HCT116 (cell line): ENCODE measurements at regions of chr2 and their contacts with region 1.

Region 1: GRCh38 chr2:110157153-110157793 is 41.7 kb upstream of the MALL start:
- DNase-seq: peak; percentile 66
- ATAC-seq: peak; percentile 93
- H3K4me3 ChIP-seq: no peak overlapping the region
- H3K27ac ChIP-seq: peak overlapping the region; percentile 1; the same call in 1 of the 2 replicates
- H3K4me1 ChIP-seq: peaks cover 0 to 9% of the 10 kb centered on the region in 2 experiments; a peak in 1 of 4 replicates
- H3K27me3 ChIP-seq: no peaks in the 10 kb centered on the region
- CTCF ChIP-seq: peak; percentile 80 to 92 (median 84)
- POLR2A ChIP-seq: no peak
- RAD21 ChIP-seq: peak; percentile 96

Region 2: GRCh38 chr2:108257757-108258331 is 1899.4 kb before region 1 on chr2:
- CTCF ChIA-PET with region 1: no interaction called
- POLR2A ChIA-PET with region 1: no interaction called
- RAD21 ChIA-PET with region 1: no interaction called
- intact Hi-C with region 1: no loop called
- DNase-seq: no peak
- ATAC-seq: no peak
- H3K4me3 ChIP-seq: no peak overlapping the region
- H3K27ac ChIP-seq: no peak overlapping the region
- H3K4me1 ChIP-seq: no peaks in the 10 kb centered on the region
- H3K27me3 ChIP-seq: no peaks in the 10 kb centered on the region
- CTCF ChIP-seq: no peak
- POLR2A ChIP-seq: no peak
- RAD21 ChIP-seq: no peak

Region 3: GRCh38 chr2:110116033-110116710 is 41.1 kb before region 1 on chr2:
- CTCF ChIA-PET with region 1: interaction called, 4 read pairs
- POLR2A ChIA-PET with region 1: no interaction called
- RAD21 ChIA-PET with region 1: no interaction called
- intact Hi-C with region 1: loop called (anchors 2 kb)
- DNase-seq: peak; percentile 56
- ATAC-seq: peak; percentile 74
- H3K4me3 ChIP-seq: peak overlapping the region; percentile 85 to 88
- H3K27ac ChIP-seq: peak overlapping the region; percentile 82
- H3K4me1 ChIP-seq: peaks cover 24 to 73% of the 10 kb centered on the region in 2 experiments
- H3K27me3 ChIP-seq: no peaks in the 10 kb centered on the region
- CTCF ChIP-seq: peak in 2 of 3 experiments; percentile 78 to 87; a peak in 4 of 6 replicates
- POLR2A ChIP-seq: no peak
- RAD21 ChIP-seq: no peak

Region 4: DNA sequence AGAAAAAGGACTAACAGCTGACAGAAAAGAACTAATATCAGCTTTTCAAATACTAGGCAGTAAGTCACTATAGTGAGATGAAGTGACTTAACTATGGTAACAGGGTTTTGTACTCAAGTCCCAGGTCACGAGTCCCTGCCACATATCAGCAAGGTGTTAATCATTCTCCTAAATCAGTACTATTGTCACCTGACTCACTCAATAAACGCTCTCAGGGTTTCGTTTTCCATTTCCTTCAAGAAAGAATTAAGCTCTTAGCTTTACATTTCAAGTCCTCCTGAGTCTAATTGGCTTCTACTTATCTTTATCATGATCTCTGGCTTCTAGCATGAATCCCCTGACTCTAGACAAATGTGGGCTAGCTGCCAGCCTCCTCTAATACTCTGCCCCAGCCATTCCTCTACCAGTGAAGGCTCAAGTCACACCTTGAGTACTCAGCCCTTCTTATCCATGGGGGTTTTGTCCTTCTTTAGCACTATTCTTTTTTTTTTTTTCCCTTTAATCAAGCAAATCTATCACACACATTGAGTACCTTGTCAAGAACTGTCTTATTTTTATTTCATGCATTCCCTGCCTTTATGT is 500.5 kb after region 1 on chr2:
- CTCF ChIA-PET with region 1: no interaction called
- POLR2A ChIA-PET with region 1: no interaction called
- RAD21 ChIA-PET with region 1: no interaction called
- intact Hi-C with region 1: no loop called
- DNase-seq: no peak
- ATAC-seq: no peak
- H3K4me3 ChIP-seq: no peak overlapping the region
- H3K27ac ChIP-seq: no peak overlapping the region
- H3K4me1 ChIP-seq: no peaks in the 10 kb centered on the region
- H3K27me3 ChIP-seq: no peaks in the 10 kb centered on the region
- CTCF ChIP-seq: no peak
- POLR2A ChIP-seq: no peak
- RAD21 ChIP-seq: no peak